Activated naive CD4-positive, alpha-beta T cell treated with anti-CD3 and anti-CD28 coated beads for 36 hours (primary cell): ENCODE measurements at regions of chrX and their contacts with region 1.

Region 1: GRCh38 chrX:40468033-40468846 is 112.5 kb upstream of the ATP6AP2 start:
- DNase-seq: peak; percentile 79
- H3K4me3 Mint-ChIP-seq: no peak overlapping the region
- H3K27ac Mint-ChIP-seq: peak overlapping the region; percentile 61
- H3K4me1 Mint-ChIP-seq: peaks cover 36% of the 10 kb centered on the region
- H3K27me3 Mint-ChIP-seq: no peaks in the 10 kb centered on the region

Region 2: GRCh38 chrX:39730662-39731397 is 737.4 kb before region 1 on chrX:
- CTCF ChIA-PET with region 1: no interaction called
- intact Hi-C with region 1: loop called (anchors 2 kb)
- DNase-seq: peak; percentile 75
- H3K4me3 Mint-ChIP-seq: peak overlapping the region; percentile 45
- H3K27ac Mint-ChIP-seq: no peak overlapping the region
- H3K4me1 Mint-ChIP-seq: peaks cover 17% of the 10 kb centered on the region
- H3K27me3 Mint-ChIP-seq: no peaks in the 10 kb centered on the region

Region 3: DNA sequence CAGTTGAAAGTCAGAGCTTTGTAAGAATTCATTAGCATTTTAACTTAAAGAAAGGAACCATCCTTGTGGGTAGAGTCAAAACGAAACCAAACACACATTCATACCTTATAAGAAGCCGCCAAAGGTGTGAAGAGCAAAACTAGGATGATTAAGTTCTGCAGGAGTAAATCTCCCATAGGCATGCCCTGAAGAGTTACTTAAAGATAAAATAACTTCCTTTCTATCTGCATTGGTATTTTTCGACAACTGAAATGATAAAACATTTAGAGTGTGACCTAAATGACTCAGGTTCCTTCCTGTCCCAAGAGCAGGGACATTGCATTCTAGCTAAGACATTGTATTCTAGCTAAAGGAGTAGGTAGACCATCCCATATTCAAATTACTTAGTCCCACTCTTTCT is 445.8 kb before region 1 on chrX:
- CTCF ChIA-PET with region 1: no interaction called
- intact Hi-C with region 1: loop called (anchors 5 kb)
- DNase-seq: peak; percentile 16
- H3K4me3 Mint-ChIP-seq: no peak overlapping the region
- H3K27ac Mint-ChIP-seq: no peak overlapping the region
- H3K4me1 Mint-ChIP-seq: peaks cover 14% of the 10 kb centered on the region
- H3K27me3 Mint-ChIP-seq: no peaks in the 10 kb centered on the region

Region 4: DNA sequence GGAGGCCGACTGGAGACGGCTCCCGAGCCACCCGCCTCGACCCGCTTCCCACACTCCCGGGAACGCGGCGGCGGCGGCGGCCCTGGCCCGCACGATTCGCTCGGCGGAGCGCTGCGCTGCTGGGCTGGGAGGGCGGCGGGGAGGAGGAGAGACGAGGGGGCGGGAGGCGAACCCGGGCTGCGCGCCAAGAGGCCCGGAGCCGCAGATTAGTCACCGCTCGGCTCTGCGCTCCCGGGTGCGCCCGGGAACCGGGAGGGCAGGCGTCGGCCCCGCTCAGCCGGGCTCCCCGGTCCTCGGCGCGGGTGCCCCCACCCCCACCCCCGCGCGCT is 359.3 kb before region 1 on chrX:
- CTCF ChIA-PET with region 1: no interaction called
- intact Hi-C with region 1: loop called (anchors 5 kb)
- DNase-seq: peak; percentile 71
- H3K4me3 Mint-ChIP-seq: peak overlapping the region; percentile 50
- H3K27ac Mint-ChIP-seq: no peak overlapping the region
- H3K4me1 Mint-ChIP-seq: peaks cover 8% of the 10 kb centered on the region
- H3K27me3 Mint-ChIP-seq: peaks cover 2% of the 10 kb centered on the region